ENCODE measurements at regions of chr4 and their contacts with region 1.

Region 1: DNA sequence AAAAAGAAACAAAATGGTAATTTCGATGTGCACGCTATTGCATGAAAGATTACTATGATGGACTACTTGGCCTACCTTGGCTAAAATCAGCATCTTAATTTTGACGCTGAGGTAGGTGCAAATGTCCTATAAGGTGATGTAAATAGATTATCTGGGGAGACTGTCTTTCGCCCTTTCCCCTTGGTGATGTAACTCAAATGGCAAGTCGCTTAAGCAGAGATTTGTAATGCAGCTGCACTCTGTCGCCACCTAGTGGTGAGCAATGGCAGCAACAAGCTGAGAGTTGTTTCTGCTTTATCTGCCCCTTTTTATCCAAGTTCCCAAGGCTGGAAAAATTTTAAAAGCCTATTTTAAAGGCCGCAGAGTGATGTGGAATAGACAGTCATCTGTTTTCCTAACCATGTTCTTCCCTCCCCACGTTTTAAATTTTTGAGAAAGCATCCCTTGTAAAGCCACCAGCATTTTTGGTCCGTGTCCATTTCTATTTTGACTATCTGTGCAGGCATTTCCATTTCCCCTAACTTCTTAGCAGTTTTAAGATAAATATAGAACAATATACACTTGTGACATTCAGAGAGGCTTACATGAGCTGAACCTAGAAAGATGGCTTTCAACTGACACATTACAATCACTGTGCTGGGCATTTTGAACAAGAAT is 62.4 kb upstream of the PDLIM3 start:
- DNase-seq: peak; percentile 55 to 73
- H3K4me3 ChIP-seq: no peak overlapping the region
- H3K4me3 Mint-ChIP-seq: no peak overlapping the region
- H3K27ac Mint-ChIP-seq: no peak overlapping the region
- H3K4me1 ChIP-seq: no peaks in the 10 kb centered on the region
- H3K4me1 Mint-ChIP-seq: no peaks in the 10 kb centered on the region
- H3K27me3 ChIP-seq: no peaks in the 10 kb centered on the region
- H3K27me3 Mint-ChIP-seq: no peaks in the 10 kb centered on the region
- CTCF ChIP-seq: peak; percentile 86 to 88

Region 2: DNA sequence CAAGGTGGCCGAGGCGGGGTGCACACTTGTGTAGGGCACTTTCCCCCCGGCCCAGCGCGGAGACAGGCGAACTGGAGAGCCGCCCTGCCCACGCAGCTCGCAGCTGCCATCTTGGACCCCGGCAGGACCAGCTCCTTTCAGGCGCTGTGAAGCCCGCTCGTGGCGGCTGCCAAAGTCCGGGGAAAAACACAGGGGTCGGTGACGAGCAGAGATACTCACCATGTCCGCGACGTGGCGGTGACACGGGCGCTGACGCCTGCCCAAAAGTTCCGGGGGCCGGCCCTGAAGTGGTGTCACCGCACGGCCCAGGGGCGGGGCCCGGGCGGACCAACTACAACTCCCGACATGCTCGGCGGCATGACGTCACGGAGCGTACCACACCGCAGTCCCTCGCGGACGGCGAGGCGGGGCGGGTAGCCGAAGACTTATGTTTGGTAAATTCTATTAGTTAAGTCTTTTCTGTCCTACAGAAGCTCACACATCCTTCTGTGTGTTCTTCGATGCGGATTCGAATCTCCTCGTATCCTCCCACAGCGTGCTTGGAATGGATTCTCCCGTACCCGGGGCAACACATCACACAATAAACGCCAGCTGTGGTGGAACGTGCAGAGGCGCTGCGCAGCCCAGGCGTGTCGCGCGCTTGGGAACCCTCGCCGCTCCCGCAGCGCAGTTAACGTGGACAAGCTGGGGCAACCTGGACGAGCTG is 171.9 kb before region 1 on chr4 and contains the start of gene UFSP2:
- CTCF ChIA-PET with region 1: interaction called, 6 read pairs
- POLR2A ChIA-PET with region 1: no interaction called
- intact Hi-C with region 1: loop called (anchors 5 kb)
- DNase-seq: peak; percentile 84 to 86
- H3K4me3 ChIP-seq: peak within 1 kb of the TSS; percentile 54
- H3K4me3 Mint-ChIP-seq: peak within 1 kb of the TSS; percentile 78
- H3K27ac Mint-ChIP-seq: peak within 1 kb of the TSS; percentile 76
- H3K4me1 ChIP-seq: no peaks in the 10 kb centered on the region
- H3K4me1 Mint-ChIP-seq: peaks cover 13% of the 10 kb centered on the region
- H3K27me3 ChIP-seq: no peaks in the 10 kb centered on the region
- H3K27me3 Mint-ChIP-seq: no peaks in the 10 kb centered on the region
- CTCF ChIP-seq: peak in 1 of 2 experiments; percentile 9
- total RNA-seq, gene UFSP2: 17.4 and 26.2 TPM in 2 replicates

Region 3: DNA sequence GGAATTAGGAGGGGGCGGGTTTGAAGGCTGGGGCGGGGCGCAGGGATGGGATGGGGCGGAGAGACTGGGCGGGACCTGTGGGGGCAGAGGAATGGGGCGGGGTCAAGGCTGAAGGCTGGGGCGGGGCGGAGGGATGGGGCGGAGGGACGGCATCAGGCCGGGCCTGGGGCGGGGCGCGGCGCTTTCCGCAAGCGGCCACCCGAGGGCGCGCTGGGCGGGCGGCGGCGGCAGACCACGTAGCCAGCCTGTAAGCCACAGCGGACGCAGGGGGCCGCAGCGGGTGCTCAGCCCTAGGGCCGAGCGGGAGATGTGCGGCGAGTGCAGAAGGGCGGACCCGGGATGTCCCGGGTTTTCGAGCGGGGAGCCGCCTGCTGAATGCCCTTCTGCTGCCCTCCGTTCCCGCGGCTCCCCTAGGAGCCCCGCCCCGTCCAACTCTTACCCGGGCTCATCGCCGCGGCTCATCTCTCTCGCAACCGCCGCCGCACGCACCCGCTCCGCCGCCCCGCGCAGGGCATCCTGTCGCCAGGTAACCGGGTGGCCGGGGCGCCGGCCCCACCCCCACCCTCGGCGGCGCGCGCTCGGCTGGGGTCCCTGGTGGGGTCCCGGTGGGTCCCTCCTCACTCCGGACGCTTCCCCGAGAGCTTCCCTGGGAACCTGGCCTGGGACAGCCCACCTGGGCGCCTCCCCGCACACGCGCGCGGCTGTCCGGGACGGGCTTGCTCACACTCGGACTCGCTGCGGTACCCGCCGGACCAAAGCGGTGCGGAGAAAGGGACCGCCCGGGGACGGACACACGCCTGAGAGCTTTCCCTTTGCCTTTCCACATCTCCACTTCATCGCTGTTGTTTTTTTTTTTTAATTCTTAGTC is 126.2 kb before region 1 on chr4 and contains the start of gene CCDC110:
- CTCF ChIA-PET with region 1: interaction called, 3 read pairs
- POLR2A ChIA-PET with region 1: no interaction called
- intact Hi-C with region 1: loop called (anchors 1 kb)
- DNase-seq: peak; percentile 93
- H3K4me3 ChIP-seq: peak within 1 kb of the TSS; percentile 70
- H3K4me3 Mint-ChIP-seq: peak within 1 kb of the TSS; percentile 78
- H3K27ac Mint-ChIP-seq: no peak within 1 kb of the TSS
- H3K4me1 ChIP-seq: 0 out of 2 replicates have a peak, but pooled peaks cover 3% of the 10 kb centered on the region
- H3K4me1 Mint-ChIP-seq: no peaks in the 10 kb centered on the region
- H3K27me3 ChIP-seq: no peaks in the 10 kb centered on the region; the same call in 1 of the 2 replicates
- H3K27me3 Mint-ChIP-seq: peaks cover 29% of the 10 kb centered on the region
- CTCF ChIP-seq: peak; percentile 2 to 67
- total RNA-seq, gene CCDC110: not detected in 2 replicates

Region 4: GRCh38 chr4:185504098-185505047 is 93.3 kb before region 1 on chr4:
- CTCF ChIA-PET with region 1: no interaction called
- POLR2A ChIA-PET with region 1: no interaction called
- intact Hi-C with region 1: loop called (anchors 1 kb)
- DNase-seq: peak; percentile 85 to 90
- H3K4me3 ChIP-seq: peak overlapping the region; percentile 26
- H3K4me3 Mint-ChIP-seq: peak overlapping the region; percentile 73
- H3K27ac Mint-ChIP-seq: peak overlapping the region; percentile 86
- H3K4me1 ChIP-seq: peaks cover 12% of the 10 kb centered on the region
- H3K4me1 Mint-ChIP-seq: peaks cover 8% of the 10 kb centered on the region
- H3K27me3 ChIP-seq: no peaks in the 10 kb centered on the region
- H3K27me3 Mint-ChIP-seq: no peaks in the 10 kb centered on the region
- CTCF ChIP-seq: no peak

Region 5: GRCh38 chr4:185534866-185535611 is 62.6 kb before region 1 on chr4 and contains the start of gene PDLIM3:
- CTCF ChIA-PET with region 1: interaction called, 3 read pairs
- POLR2A ChIA-PET with region 1: interaction called, 8 read pairs
- intact Hi-C with region 1: loop called (anchors 5 kb)
- DNase-seq: peak; percentile 52 to 73
- H3K4me3 ChIP-seq: peak within 1 kb of the TSS; percentile 55
- H3K4me3 Mint-ChIP-seq: peak within 1 kb of the TSS; percentile 72
- H3K27ac Mint-ChIP-seq: no peak within 1 kb of the TSS
- H3K4me1 ChIP-seq: peaks cover 4% of the 10 kb centered on the region; the same call in 1 of the 2 replicates
- H3K4me1 Mint-ChIP-seq: no peaks in the 10 kb centered on the region
- H3K27me3 ChIP-seq: peaks cover 2% of the 10 kb centered on the region
- H3K27me3 Mint-ChIP-seq: peaks cover 5% of the 10 kb centered on the region
- CTCF ChIP-seq: no peak
- total RNA-seq, gene PDLIM3: 3.6 and 4.8 TPM in 2 replicates

Region 6: DNA sequence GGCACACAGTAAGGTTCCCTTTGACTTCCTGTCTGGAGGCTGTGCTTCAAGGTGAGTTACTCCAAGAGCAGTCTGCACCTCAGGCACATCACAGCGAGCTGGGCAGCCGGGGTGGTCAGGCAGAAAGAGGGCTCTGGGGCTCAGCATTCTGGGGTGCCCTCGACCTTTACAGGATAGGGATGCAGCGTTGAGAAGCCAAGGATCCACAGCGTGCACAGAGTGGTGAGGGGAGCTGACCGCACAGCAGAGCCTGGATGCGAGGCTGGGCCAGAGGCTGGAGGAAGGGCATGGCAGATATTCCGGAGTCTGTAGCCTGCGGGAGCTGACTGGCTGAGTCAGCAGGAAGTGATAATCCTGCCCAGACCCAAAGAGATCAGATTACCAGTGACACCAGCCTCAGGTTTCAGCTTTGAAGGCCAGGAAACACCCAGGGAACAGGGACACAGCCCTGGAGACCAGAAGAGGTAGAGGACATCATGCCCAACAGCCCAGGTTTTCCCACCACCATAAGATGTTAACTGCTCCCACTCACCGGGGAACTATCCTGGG is 23.9 kb before region 1 on chr4:
- CTCF ChIA-PET with region 1: no interaction called
- POLR2A ChIA-PET with region 1: no interaction called
- intact Hi-C with region 1: no loop called
- DNase-seq: peak in 1 of 2 experiments; percentile 50
- H3K4me3 ChIP-seq: no peak overlapping the region
- H3K4me3 Mint-ChIP-seq: no peak overlapping the region
- H3K27ac Mint-ChIP-seq: no peak overlapping the region
- H3K4me1 ChIP-seq: no peaks in the 10 kb centered on the region
- H3K4me1 Mint-ChIP-seq: no peaks in the 10 kb centered on the region
- H3K27me3 ChIP-seq: no peaks in the 10 kb centered on the region
- H3K27me3 Mint-ChIP-seq: no peaks in the 10 kb centered on the region
- CTCF ChIP-seq: no peak

Region 7: DNA sequence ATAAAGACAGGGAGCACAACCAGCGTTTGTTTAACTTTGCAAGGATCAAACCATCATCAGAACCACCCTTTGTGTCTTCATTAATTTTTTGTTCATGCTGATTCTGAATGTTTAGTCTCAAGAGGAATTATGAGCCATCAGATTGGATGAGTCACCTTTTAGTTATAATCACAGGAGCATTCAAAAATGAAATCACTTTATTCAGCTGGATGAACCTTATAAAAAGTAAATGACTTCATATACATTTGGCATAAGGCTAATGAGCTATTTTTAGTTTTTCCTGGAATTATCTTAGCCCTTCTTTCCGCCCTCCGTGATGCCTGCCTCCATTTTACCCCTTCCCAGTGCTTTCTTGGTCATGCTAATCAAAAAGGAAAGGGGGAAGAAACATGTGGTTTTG is 110.7 kb after region 1 on chr4:
- CTCF ChIA-PET with region 1: no interaction called
- POLR2A ChIA-PET with region 1: no interaction called
- intact Hi-C with region 1: no loop called
- DNase-seq: no peak
- H3K4me3 ChIP-seq: no peak overlapping the region
- H3K4me3 Mint-ChIP-seq: no peak overlapping the region
- H3K27ac Mint-ChIP-seq: no peak overlapping the region
- H3K4me1 ChIP-seq: peaks cover 19% of the 10 kb centered on the region
- H3K4me1 Mint-ChIP-seq: peaks cover 25% of the 10 kb centered on the region
- H3K27me3 ChIP-seq: no peaks in the 10 kb centered on the region
- H3K27me3 Mint-ChIP-seq: no peaks in the 10 kb centered on the region
- CTCF ChIP-seq: no peak

Region 8: DNA sequence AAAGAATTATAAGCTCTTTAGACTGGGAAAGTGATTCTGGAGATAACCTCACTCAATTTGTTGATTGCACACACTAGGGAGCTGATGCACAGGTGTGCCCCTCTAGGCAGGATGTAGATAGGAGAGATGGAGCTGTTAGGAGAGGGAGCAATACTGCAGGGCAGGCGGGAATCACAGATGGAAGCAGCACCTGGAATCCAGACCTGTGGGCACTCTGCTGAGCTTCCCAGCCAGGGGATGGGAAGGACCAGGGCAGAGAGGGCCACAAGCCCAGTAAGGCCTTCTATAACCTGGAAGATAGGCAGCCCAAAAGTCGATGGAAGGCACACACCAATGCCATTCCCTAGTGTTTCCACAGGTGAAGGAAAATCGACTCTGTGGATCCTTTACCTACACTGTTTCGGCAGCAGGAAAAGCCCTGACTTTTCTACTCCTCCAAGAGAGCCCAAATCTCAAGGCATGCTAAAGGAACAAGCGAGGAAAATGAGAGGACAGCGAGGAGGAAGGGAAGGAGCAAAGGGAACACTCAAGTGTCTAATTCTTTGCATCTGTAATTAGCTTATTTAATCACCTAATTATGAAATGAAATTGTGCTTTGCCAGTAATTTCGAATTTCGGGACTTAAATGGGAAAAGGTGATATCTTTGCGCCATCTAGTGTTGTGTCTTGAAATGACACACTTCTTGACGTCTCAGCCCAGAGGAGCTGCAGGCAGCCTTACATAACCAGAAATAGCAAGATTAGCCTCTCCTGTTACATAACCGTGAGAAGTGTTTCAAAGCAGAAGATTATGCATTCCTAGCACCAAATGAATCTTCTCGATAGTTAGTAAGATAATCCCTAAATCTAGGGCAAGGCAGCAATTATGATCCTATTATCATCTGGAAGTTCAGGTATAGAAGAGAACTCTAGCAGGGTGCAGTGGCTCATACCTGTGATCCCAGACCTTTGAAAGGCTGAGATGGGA is 440.3 kb after region 1 on chr4:
- CTCF ChIA-PET with region 1: interaction called, 5 read pairs
- POLR2A ChIA-PET with region 1: no interaction called
- intact Hi-C with region 1: loop called (anchors 2 kb)
- DNase-seq: peak in 1 of 2 experiments; percentile 61
- H3K4me3 ChIP-seq: no peak overlapping the region
- H3K4me3 Mint-ChIP-seq: no peak overlapping the region
- H3K27ac Mint-ChIP-seq: no peak overlapping the region
- H3K4me1 ChIP-seq: 0 out of 2 replicates have a peak, but pooled peaks cover 5% of the 10 kb centered on the region
- H3K4me1 Mint-ChIP-seq: no peaks in the 10 kb centered on the region
- H3K27me3 ChIP-seq: no peaks in the 10 kb centered on the region
- H3K27me3 Mint-ChIP-seq: peaks cover 3% of the 10 kb centered on the region
- CTCF ChIP-seq: peak; percentile 47 to 62